ENCODE measurements at regions of chr3 and their contacts with region 1.

Region 1: GRCh38 chr3:67113802-67114407 is 115.8 kb downstream of the KBTBD8 start:
- DNase-seq: peak; percentile 87
- H3K4me3 ChIP-seq: no peak overlapping the region
- H3K27ac ChIP-seq: no peak overlapping the region
- H3K4me1 ChIP-seq: no peaks in the 10 kb centered on the region
- H3K27me3 ChIP-seq: no peaks in the 10 kb centered on the region
- CTCF ChIP-seq: peak; percentile 93 to 96
- POLR2A ChIP-seq: no peak

Region 2: DNA sequence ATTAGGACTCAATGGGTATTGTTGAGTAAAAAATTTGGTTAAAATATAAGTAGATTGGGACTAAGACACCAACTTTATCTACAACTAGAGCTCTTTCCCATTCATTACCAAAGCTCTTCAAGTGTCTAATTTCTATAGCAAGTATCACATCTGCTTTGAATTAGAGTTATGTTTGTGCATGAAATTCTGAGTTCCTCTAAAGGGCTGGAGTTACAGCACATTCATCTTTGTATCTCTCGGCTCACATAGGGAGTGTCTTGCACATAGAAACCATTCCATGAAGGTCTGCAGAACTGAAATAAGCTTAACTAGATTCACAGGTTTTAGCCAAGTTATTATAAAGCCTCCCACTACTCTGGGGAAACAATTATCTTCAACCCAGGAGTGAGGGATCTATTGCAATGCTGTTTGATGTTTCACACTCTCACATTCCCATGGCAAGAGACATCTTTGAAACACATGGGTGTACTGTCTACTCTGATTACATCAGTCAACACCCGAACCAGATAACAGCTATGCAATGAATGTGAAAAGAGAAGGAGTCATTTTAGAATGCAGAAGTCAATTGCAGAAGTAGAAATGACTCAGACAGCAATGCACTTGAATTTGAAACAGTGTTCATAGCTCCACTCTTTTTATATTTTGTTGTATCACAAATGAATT is 208.9 kb before region 1 on chr3:
- CTCF ChIA-PET with region 1: no interaction called
- POLR2A ChIA-PET with region 1: no interaction called
- dilution Hi-C with region 1: no loop called
- intact Hi-C with region 1: no loop called
- DNase-seq: no peak
- H3K4me3 ChIP-seq: no peak overlapping the region
- H3K27ac ChIP-seq: no peak overlapping the region
- H3K4me1 ChIP-seq: no peaks in the 10 kb centered on the region
- H3K27me3 ChIP-seq: no peaks in the 10 kb centered on the region
- CTCF ChIP-seq: no peak
- POLR2A ChIP-seq: no peak

Region 3: DNA sequence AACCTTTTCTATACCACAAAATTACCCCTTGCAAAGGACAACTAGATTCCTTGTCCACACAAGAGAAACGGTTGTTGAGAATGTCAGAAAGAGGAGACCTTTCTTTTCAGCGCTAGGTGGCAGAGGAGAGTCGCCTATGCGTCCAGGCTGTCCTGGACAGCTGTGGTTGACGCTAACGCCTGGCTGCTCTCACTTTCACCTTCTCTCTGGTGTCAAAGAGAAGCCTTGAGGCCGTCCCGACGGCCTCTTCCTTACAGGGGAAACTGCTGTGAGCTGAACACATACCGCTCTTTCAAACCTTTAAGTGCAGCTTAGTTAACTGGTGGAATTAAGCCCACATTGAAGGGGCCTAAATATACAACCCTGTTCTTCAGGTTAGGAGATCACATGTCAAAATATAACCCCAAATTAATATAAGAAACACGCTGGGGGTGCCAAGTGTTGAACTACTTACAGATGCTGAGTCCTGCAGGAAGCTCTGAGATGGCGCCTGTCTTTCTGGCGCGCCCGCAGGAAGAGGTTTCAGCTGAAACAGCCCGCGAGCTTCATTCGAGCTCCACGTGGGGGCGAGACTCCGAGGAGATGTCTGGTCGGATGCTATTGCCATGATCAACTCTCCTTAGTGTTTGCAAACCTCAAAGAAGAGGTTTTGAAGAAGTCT is 141.9 kb before region 1 on chr3:
- CTCF ChIA-PET with region 1: interaction called, 48 read pairs
- POLR2A ChIA-PET with region 1: no interaction called
- dilution Hi-C with region 1: no loop called
- intact Hi-C with region 1: loop called (anchors 1 kb)
- DNase-seq: peak; percentile 77
- H3K4me3 ChIP-seq: peak overlapping the region in 2 of 3 experiments; percentile 1 to 46
- H3K27ac ChIP-seq: no peak overlapping the region
- H3K4me1 ChIP-seq: peaks cover 6% of the 10 kb centered on the region
- H3K27me3 ChIP-seq: peaks cover 2 to 4% of the 10 kb centered on the region in 2 experiments
- CTCF ChIP-seq: peak; percentile 82 to 89
- POLR2A ChIP-seq: no peak

Region 4: DNA sequence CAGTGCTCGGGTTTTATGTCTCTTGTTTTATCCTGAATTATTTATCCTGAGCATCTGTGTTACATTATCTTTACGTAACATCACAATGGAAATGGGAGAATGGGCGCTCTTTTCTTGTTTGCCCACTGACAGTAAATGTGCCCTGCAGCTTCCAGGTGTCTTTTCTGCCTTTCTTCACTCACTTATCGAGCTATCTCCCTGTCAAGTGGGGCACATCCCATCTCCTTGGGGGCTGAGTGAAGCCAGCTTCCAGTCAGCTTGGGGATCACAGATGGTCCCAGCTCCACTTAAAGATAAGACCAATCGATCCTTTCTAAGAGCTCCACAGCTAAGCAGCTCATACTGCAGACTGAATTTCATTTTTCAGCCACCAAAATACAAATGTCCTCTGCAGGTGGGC is 10.0 kb after region 1 on chr3:
- CTCF ChIA-PET with region 1: interaction called, 36 read pairs
- POLR2A ChIA-PET with region 1: no interaction called
- dilution Hi-C with region 1: no loop called
- intact Hi-C with region 1: no loop called
- DNase-seq: no peak
- H3K4me3 ChIP-seq: no peak overlapping the region
- H3K27ac ChIP-seq: no peak overlapping the region
- H3K4me1 ChIP-seq: no peaks in the 10 kb centered on the region
- H3K27me3 ChIP-seq: no peaks in the 10 kb centered on the region
- CTCF ChIP-seq: no peak
- POLR2A ChIP-seq: no peak

Region 5: GRCh38 chr3:67790043-67790442 is 676.1 kb after region 1 on chr3:
- CTCF ChIA-PET with region 1: interaction called, 54 read pairs
- POLR2A ChIA-PET with region 1: no interaction called
- dilution Hi-C with region 1: no loop called
- intact Hi-C with region 1: loop called (anchors 1 kb)
- DNase-seq: peak; percentile 68
- H3K4me3 ChIP-seq: no peak overlapping the region
- H3K27ac ChIP-seq: no peak overlapping the region
- H3K4me1 ChIP-seq: no peaks in the 10 kb centered on the region
- H3K27me3 ChIP-seq: peaks cover 0 to 2% of the 10 kb centered on the region in 2 experiments
- CTCF ChIP-seq: peak; percentile 62 to 67
- POLR2A ChIP-seq: no peak

Region 6: GRCh38 chr3:68876112-68876713 is 1762.3 kb after region 1 on chr3:
- CTCF ChIA-PET with region 1: interaction called, 299 read pairs
- POLR2A ChIA-PET with region 1: no interaction called
- dilution Hi-C with region 1: no loop called
- intact Hi-C with region 1: loop called (anchors 1 kb)
- DNase-seq: peak; percentile 73
- H3K4me3 ChIP-seq: no peak overlapping the region
- H3K27ac ChIP-seq: no peak overlapping the region
- H3K4me1 ChIP-seq: no peaks in the 10 kb centered on the region
- H3K27me3 ChIP-seq: peaks cover 3 to 4% of the 10 kb centered on the region in 2 experiments
- CTCF ChIP-seq: peak; percentile 55 to 71
- POLR2A ChIP-seq: no peak